Left cardiac atrium (tissue), 4 donors: ENCODE measurements at regions of chr2 and their contacts with region 1.

Region 1: DNA sequence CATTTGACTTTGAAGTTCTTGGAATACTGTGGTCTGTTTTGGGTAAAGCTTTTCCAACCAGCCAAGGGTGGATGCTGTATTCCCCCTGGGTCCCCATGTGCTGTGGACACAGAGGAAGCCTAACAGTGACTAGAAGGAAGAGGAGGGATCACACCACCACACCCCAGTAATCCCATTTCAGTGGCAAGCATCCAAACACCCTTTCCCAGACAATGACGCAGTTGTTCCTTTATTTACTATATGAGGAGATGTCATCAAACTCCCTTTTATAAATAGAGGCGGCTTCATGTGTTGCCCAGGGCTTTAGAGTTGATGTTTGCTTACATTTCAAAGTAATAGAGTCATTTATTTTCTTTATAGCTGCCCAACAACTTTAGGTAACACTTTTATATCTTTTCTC is 959.4 kb upstream of the GYPC start:
- DNase-seq: no peak
- ATAC-seq: no peak

Region 2: DNA sequence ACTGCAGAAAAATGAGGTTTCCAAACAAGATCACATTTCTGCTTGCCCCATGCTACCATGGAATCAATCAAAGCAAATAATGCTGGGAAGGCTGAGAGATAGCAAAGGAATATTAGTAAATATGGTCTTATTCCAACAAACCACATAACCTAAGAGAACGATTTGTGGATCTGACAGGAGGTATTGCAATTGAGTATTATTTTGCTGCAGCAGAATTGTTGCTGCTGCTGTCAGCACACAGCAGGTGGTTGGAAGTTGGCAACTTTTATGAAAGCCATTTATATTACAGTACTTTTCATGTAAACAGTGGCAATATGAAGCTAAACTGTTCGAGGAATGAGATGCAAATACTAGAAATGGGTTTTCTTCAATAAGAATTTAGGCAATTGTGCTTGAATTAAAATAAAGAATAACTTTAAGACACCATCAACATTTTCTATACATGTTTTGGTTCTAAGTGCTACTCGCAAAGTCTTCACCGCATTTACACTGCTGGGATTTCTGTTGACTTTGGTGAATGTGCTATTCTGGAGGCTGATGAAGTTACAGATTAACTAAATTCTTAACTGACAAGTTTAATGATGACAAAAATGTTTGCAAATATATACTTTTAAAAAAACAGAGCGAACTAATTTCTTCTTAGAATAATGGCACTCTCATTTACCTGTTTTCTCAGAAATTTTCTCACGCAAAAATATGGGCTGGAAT is 385.8 kb before region 1 on chr2:
- intact Hi-C with region 1: no loop called
- DNase-seq: no peak
- ATAC-seq: no peak

Region 3: DNA sequence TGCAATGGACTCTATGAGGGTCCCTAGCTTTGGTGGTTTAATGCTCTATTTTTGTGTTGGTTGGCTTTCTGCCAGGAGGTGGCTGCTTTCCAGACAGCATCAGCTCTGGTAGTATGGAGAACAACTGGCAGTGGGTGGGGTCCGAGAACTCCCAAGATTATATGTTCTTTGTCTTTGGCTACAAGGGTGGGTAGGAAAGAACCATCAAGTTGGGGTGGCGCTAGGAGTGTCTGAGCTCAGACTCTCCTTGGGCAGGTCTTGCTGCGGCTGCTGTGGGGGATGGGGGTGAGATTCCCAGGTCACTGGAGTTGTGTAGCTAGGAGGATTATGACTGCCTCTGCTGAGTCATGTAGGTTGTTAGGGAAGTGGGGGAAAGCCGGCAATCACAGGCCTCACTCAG is 16.7 kb before region 1 on chr2:
- intact Hi-C with region 1: loop called in 1 of 2 experiments (anchors 1 kb)
- DNase-seq: no peak
- ATAC-seq: no peak